Activated CD4-positive, alpha-beta T cell treated with anti-CD3 and anti-CD28 coated beads for 36 hours (primary cell): ENCODE measurements at regions of chr7 and their contacts with region 1.

Region 1: GRCh38 chr7:129952653-129953560 is at the start of gene UBE2H:
- DNase-seq: peak; percentile 96
- ATAC-seq: peak; percentile 66
- H3K4me3 Mint-ChIP-seq: no peak within 1 kb of the TSS
- H3K27ac Mint-ChIP-seq: peak within 1 kb of the TSS; percentile 99
- H3K4me1 Mint-ChIP-seq: peaks cover 8% of the 10 kb centered on the region
- H3K27me3 Mint-ChIP-seq: no peaks in the 10 kb centered on the region
- total RNA-seq, gene UBE2H: 25.6 to 40.7 TPM

Region 2: GRCh38 chr7:129530795-129531391 is 422.0 kb before region 1 on chr7:
- CTCF ChIA-PET with region 1: no interaction called
- POLR2A ChIA-PET with region 1: no interaction called
- intact Hi-C with region 1: loop called in 1 of 2 experiments (anchors 2 kb)
- DNase-seq: peak; percentile 70
- ATAC-seq: peak; percentile 96
- H3K4me3 Mint-ChIP-seq: no peak overlapping the region
- H3K27ac Mint-ChIP-seq: peak overlapping the region; percentile 13
- H3K4me1 Mint-ChIP-seq: peaks cover 11% of the 10 kb centered on the region
- H3K27me3 Mint-ChIP-seq: peaks cover 10% of the 10 kb centered on the region

Region 3: GRCh38 chr7:129698516-129699418 is 254.1 kb before region 1 on chr7:
- CTCF ChIA-PET with region 1: no interaction called
- POLR2A ChIA-PET with region 1: no interaction called
- intact Hi-C with region 1: no loop called
- DNase-seq: no peak
- ATAC-seq: peak; percentile 61
- H3K4me3 Mint-ChIP-seq: no peak overlapping the region
- H3K27ac Mint-ChIP-seq: peak overlapping the region; percentile 85
- H3K4me1 Mint-ChIP-seq: peaks cover 7% of the 10 kb centered on the region
- H3K27me3 Mint-ChIP-seq: no peaks in the 10 kb centered on the region

Region 4: GRCh38 chr7:129906700-129907099 is 46.2 kb before region 1 on chr7:
- CTCF ChIA-PET with region 1: no interaction called
- POLR2A ChIA-PET with region 1: interaction called, 3 read pairs
- intact Hi-C with region 1: loop called (anchors 1 to 5 kb)
- DNase-seq: no peak
- ATAC-seq: peak; percentile 89
- H3K4me3 Mint-ChIP-seq: no peak overlapping the region
- H3K27ac Mint-ChIP-seq: peak overlapping the region; percentile 56
- H3K4me1 Mint-ChIP-seq: peaks cover 87% of the 10 kb centered on the region
- H3K27me3 Mint-ChIP-seq: no peaks in the 10 kb centered on the region

Region 5: GRCh38 chr7:130182990-130183389 is 230.1 kb after region 1 on chr7:
- CTCF ChIA-PET with region 1: no interaction called
- POLR2A ChIA-PET with region 1: no interaction called
- intact Hi-C with region 1: loop called (anchors 2 to 10 kb)
- DNase-seq: no peak
- ATAC-seq: peak; percentile 38
- H3K4me3 Mint-ChIP-seq: no peak overlapping the region
- H3K27ac Mint-ChIP-seq: peak overlapping the region; percentile 72
- H3K4me1 Mint-ChIP-seq: peaks cover 33% of the 10 kb centered on the region
- H3K27me3 Mint-ChIP-seq: no peaks in the 10 kb centered on the region

Region 6: GRCh38 chr7:130476297-130477150 is 523.6 kb after region 1 on chr7:
- CTCF ChIA-PET with region 1: no interaction called
- POLR2A ChIA-PET with region 1: no interaction called
- intact Hi-C with region 1: no loop called
- DNase-seq: no peak
- ATAC-seq: peak; percentile 92
- H3K4me3 Mint-ChIP-seq: no peak overlapping the region
- H3K27ac Mint-ChIP-seq: no peak overlapping the region
- H3K4me1 Mint-ChIP-seq: peaks cover 14% of the 10 kb centered on the region
- H3K27me3 Mint-ChIP-seq: peaks cover 2% of the 10 kb centered on the region